Mammary epithelial cell (primary cell): ENCODE measurements at regions of chrX and their contacts with region 1.

Region 1: GRCh38 chrX:71976753-71977152 is 66.1 kb downstream of the NHSL2 start:
- DNase-seq: no peak
- H3K4me3 ChIP-seq: no peak overlapping the region
- H3K27ac ChIP-seq: no peak overlapping the region
- H3K4me1 ChIP-seq: no peaks in the 10 kb centered on the region
- H3K27me3 ChIP-seq: peaks cover 3% of the 10 kb centered on the region
- CTCF ChIP-seq: no peak

Region 2: DNA sequence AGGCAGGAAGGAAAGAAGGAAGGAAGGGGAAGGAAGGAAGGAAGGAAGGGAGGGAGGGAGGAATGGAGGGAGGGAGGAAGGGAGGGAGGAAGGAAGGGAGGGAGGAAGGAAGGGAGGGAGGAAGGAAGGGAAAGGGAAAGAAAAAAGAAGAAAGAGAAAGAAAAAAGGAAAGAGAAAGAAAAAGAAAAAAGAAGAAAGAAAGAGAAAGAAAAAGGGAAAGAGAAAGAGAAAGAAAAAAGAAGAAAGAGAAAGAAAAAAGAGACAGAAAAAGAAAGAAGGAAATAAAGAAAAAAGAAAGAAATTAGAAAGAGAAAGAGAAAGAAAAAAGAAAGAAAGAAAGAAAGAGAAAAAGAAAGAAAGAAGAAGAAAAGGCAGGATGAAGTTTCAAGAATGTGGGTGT is 81.1 kb before region 1 on chrX:
- CTCF ChIA-PET with region 1: no interaction called
- dilution Hi-C with region 1: no loop called
- in situ Hi-C with region 1: no loop called
- intact Hi-C with region 1: no loop called
- DNase-seq: no peak
- H3K4me3 ChIP-seq: no peak overlapping the region
- H3K27ac ChIP-seq: no peak overlapping the region
- H3K4me1 ChIP-seq: no peaks in the 10 kb centered on the region
- H3K27me3 ChIP-seq: peaks cover 1% of the 10 kb centered on the region
- CTCF ChIP-seq: no peak

Region 3: GRCh38 chrX:71910986-71911730 is 65.6 kb before region 1 on chrX:
- CTCF ChIA-PET with region 1: no interaction called
- dilution Hi-C with region 1: loop called (anchors 5 kb)
- in situ Hi-C with region 1: no loop called
- intact Hi-C with region 1: no loop called
- DNase-seq: no peak
- H3K4me3 ChIP-seq: peak overlapping the region in 2 of 3 experiments; percentile 23
- H3K27ac ChIP-seq: no peak overlapping the region
- H3K4me1 ChIP-seq: peaks cover 5% of the 10 kb centered on the region
- H3K27me3 ChIP-seq: peaks cover 18% of the 10 kb centered on the region
- CTCF ChIP-seq: no peak

Region 4: GRCh38 chrX:72045552-72046277 is 69.0 kb after region 1 on chrX:
- CTCF ChIA-PET with region 1: no interaction called
- dilution Hi-C with region 1: no loop called
- in situ Hi-C with region 1: no loop called
- intact Hi-C with region 1: no loop called
- DNase-seq: peak; percentile 62
- H3K4me3 ChIP-seq: no peak overlapping the region
- H3K27ac ChIP-seq: no peak overlapping the region
- H3K4me1 ChIP-seq: peaks cover 6% of the 10 kb centered on the region
- H3K27me3 ChIP-seq: no peaks in the 10 kb centered on the region
- CTCF ChIP-seq: no peak